Activated CD4-positive, alpha-beta memory T cell treated with anti-CD3 and anti-CD28 coated beads, Interleukin-2, amount 10 ng/mL, durations not matched to agents 7 days and 5 days (primary cell): ENCODE measurements at regions of chr17 and their contacts with region 1.

Region 1: GRCh38 chr17:59619293-59620063 is at the start of gene CLTC:
- DNase-seq: peak; percentile 93
- H3K4me3 Mint-ChIP-seq: peak within 1 kb of the TSS; percentile 89
- H3K27ac Mint-ChIP-seq: peak within 1 kb of the TSS; percentile 99
- H3K4me1 Mint-ChIP-seq: peaks cover 50% of the 10 kb centered on the region
- H3K27me3 Mint-ChIP-seq: no peaks in the 10 kb centered on the region
- total RNA-seq, gene CLTC: 156 to 163 TPM

Region 2: GRCh38 chr17:59331129-59331928 is 288.1 kb before region 1 on chr17 and contains the start of gene YPEL2:
- CTCF ChIA-PET with region 1: interaction called, 3 read pairs
- POLR2A ChIA-PET with region 1: interaction called, 13 read pairs
- DNase-seq: peak; percentile 90
- H3K4me3 Mint-ChIP-seq: peak within 1 kb of the TSS; percentile 85
- H3K27ac Mint-ChIP-seq: peak within 1 kb of the TSS; percentile 89
- H3K4me1 Mint-ChIP-seq: peaks cover 65% of the 10 kb centered on the region
- H3K27me3 Mint-ChIP-seq: no peaks in the 10 kb centered on the region
- total RNA-seq, gene YPEL2: 17.1 to 18.4 TPM

Region 3: GRCh38 chr17:59601130-59601529 is 18.3 kb before region 1 on chr17:
- CTCF ChIA-PET with region 1: interaction called, 3 read pairs
- POLR2A ChIA-PET with region 1: interaction called, 19 read pairs
- DNase-seq: peak; percentile 20
- H3K4me3 Mint-ChIP-seq: no peak overlapping the region
- H3K27ac Mint-ChIP-seq: no peak overlapping the region
- H3K4me1 Mint-ChIP-seq: peaks cover 15% of the 10 kb centered on the region
- H3K27me3 Mint-ChIP-seq: no peaks in the 10 kb centered on the region

Region 4: DNA sequence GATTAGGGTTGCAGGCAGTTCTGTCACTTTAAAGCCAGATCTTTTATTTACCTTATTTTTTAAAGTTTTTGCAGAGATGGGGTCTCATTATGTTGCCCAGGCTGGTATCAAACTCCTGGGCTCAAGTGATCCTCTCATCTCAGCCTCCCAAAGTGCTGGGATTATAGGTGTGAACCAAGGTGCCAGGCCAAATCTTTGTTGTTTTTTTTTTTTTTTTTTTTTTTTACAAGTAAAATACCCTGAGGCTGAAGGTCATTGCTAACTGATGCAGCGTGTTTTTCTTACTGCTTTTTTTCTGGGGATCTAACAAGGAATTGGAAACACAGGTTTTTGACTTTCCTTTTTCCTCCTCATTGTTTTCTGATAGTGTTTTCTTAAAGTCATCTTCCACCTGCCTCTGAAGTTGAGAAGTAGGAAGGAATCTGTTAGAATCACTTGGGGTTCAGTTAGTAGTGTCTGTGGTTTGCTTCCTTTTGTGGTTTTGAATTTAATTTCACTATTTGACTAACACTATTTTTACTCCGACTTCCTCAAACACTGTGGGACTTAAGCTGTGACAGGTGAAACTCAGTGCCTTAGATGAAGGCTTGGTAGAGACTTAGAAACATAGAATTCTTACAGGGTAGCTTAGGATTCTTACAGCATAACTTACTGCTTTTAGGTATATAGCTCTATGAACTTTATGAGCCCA is 22.5 kb after region 1 on chr17:
- CTCF ChIA-PET with region 1: no interaction called
- POLR2A ChIA-PET with region 1: interaction called, 98 read pairs
- DNase-seq: no peak
- H3K4me3 Mint-ChIP-seq: peak overlapping the region; percentile 8
- H3K27ac Mint-ChIP-seq: peak overlapping the region; percentile 55
- H3K4me1 Mint-ChIP-seq: peaks cover 44% of the 10 kb centered on the region
- H3K27me3 Mint-ChIP-seq: no peaks in the 10 kb centered on the region

Region 5: DNA sequence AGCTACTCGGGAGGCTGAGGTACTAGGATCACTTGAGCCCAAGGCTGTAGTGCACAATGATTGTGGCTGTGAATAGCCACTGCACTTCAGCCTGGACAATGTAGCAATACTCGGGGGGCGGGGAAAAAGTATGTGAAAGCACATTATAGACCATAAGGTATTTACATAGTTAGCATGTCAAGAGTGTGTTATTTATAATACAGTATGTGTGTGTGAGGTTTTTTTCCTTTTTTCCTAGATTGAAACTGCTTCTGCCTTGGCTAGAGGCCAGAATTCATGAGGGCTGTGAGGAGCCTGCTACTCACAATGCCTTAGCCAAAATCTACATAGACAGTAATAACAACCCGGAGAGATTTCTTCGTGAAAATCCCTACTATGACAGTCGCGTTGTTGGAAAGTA is 57.2 kb after region 1 on chr17:
- CTCF ChIA-PET with region 1: no interaction called
- POLR2A ChIA-PET with region 1: interaction called, 14 read pairs
- DNase-seq: no peak
- H3K4me3 Mint-ChIP-seq: no peak overlapping the region
- H3K27ac Mint-ChIP-seq: no peak overlapping the region
- H3K4me1 Mint-ChIP-seq: peaks cover 6% of the 10 kb centered on the region
- H3K27me3 Mint-ChIP-seq: no peaks in the 10 kb centered on the region

Region 6: GRCh38 chr17:59725691-59726090 is 106.2 kb after region 1 on chr17:
- CTCF ChIA-PET with region 1: no interaction called
- POLR2A ChIA-PET with region 1: no interaction called
- DNase-seq: no peak
- H3K4me3 Mint-ChIP-seq: no peak overlapping the region
- H3K27ac Mint-ChIP-seq: no peak overlapping the region
- H3K4me1 Mint-ChIP-seq: peaks cover 12% of the 10 kb centered on the region
- H3K27me3 Mint-ChIP-seq: no peaks in the 10 kb centered on the region

Region 7: DNA sequence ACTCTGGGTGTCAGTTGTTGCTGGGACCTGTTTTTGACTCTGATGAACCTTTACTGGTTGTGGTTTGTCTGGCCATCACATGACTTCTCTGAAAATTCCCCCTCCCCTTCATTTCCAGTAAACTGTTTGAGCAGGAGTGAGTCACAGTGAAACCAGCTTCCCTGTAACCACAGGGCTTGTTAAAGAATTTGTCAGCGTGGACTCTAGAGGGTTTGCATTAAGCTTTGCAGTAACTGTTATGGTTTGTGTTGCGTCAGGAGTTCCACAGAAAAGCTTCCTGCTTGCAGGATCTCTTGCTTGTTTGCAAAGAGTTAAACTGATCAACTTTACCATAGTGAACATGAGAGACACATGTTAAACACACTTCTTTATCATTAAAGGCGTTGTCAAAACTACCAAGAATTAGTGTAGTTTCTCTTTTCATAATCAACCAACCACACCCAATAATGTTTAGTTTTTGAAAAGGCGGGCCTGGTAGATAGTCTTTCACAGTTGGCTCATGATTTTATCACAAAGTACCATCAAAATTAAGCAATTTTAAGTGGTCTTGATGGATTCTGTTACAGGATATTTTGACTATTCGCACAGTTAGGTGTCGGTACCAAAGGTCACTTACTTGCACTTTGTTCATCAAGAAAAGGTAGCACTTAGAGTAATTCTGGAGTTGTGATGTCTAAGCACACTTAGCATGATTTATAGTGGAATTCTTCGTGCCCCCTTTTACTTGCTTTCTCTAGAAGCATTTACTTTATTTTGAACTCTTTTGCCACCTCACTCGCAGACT is 167.2 kb after region 1 on chr17:
- CTCF ChIA-PET with region 1: no interaction called
- POLR2A ChIA-PET with region 1: interaction called, 14 read pairs
- DNase-seq: peak; percentile 89
- H3K4me3 Mint-ChIP-seq: peak overlapping the region; percentile 79
- H3K27ac Mint-ChIP-seq: peak overlapping the region; percentile 97
- H3K4me1 Mint-ChIP-seq: peaks cover 63% of the 10 kb centered on the region
- H3K27me3 Mint-ChIP-seq: no peaks in the 10 kb centered on the region

Region 8: GRCh38 chr17:59892924-59893676 is 273.6 kb after region 1 on chr17 and contains the starts of genes RPS6KB1 and TUBD1:
- CTCF ChIA-PET with region 1: no interaction called
- POLR2A ChIA-PET with region 1: interaction called, 13 read pairs
- DNase-seq: peak; percentile 98
- H3K4me3 Mint-ChIP-seq: peak within 1 kb of the TSS; percentile 100
- H3K27ac Mint-ChIP-seq: peak within 1 kb of the TSS; percentile 96
- H3K4me1 Mint-ChIP-seq: peaks cover 56% of the 10 kb centered on the region
- H3K27me3 Mint-ChIP-seq: no peaks in the 10 kb centered on the region
- total RNA-seq, gene RPS6KB1: 44.3 to 50.1 TPM
- total RNA-seq, gene TUBD1: 11.4 to 11.7 TPM